ENCODE measurements at regions of chr15 and their contacts with region 1.

Region 1: GRCh38 chr15:52139599-52140491 is 27.3 kb upstream of the BCL2L10 start:
- DNase-seq: peak; percentile 74
- H3K4me3 ChIP-seq: no peak overlapping the region
- H3K27ac ChIP-seq: peak overlapping the region; percentile 3
- H3K4me1 ChIP-seq: peaks cover 11% of the 10 kb centered on the region
- H3K27me3 ChIP-seq: no peaks in the 10 kb centered on the region
- CTCF ChIP-seq: peak; percentile 94

Region 2: DNA sequence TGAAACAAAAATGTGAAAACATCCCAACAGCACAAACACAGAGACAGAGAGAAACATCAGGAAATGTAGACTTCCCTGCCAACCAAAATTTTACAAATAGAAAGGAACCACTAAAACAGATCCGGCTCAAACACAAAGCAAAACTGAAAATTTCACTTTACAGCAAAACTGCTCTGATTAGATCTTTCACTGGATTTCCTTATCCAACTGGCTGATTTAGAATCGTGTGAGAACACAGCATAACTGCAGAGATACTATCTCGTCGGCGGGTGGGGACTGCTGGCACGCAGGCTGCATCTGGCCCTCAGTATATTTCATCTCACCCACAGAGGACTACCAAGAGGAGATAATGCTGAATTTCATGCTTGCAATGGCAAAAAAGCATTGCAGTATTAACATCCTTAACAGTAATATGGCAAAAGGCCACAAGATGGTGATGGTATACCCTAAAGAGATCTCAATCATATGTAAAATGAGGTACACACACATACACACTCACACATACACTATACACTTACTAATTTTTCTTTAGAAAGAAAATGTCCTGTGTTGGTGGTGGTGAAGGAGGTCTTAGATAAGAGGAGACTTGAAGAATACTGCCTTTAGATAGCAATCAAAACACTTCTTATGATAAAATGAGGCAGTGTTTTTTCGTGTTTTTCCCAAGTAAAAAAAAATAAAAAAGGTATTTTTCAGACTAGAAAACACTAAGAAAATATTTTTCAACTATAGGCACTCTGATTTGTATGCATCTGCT is 157.7 kb before region 1 on chr15:
- CTCF ChIA-PET with region 1: interaction called, 5 read pairs
- POLR2A ChIA-PET with region 1: no interaction called
- intact Hi-C with region 1: loop called (anchors 2 kb)
- DNase-seq: peak; percentile 88
- H3K4me3 ChIP-seq: peak overlapping the region; percentile 10
- H3K27ac ChIP-seq: peak overlapping the region; percentile 3
- H3K4me1 ChIP-seq: peaks cover 5% of the 10 kb centered on the region
- H3K27me3 ChIP-seq: no peaks in the 10 kb centered on the region
- CTCF ChIP-seq: peak; percentile 66

Region 3: DNA sequence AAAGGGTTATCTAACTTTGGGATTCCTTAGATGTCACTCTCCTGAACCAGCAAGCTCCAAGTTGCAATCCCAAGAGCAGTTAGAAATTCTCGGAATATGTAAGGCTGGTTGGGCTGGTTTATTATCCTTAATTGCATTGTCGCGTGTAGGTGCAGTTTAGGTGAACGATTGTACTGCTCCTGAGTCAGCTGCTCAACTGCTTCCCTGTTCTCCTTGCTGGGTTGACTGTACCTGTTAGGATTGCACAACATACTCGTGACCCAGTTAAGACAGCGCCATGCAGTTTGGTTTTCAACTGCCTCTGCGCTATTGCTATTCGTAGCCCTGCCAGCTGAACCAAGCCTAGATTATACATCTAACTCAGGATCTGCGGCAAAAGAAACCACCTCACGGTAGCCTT is 68.3 kb before region 1 on chr15:
- CTCF ChIA-PET with region 1: no interaction called
- POLR2A ChIA-PET with region 1: interaction called, 11 read pairs
- intact Hi-C with region 1: no loop called
- DNase-seq: no peak
- H3K4me3 ChIP-seq: no peak overlapping the region
- H3K27ac ChIP-seq: no peak overlapping the region
- H3K4me1 ChIP-seq: no peaks in the 10 kb centered on the region
- H3K27me3 ChIP-seq: no peaks in the 10 kb centered on the region
- CTCF ChIP-seq: no peak

Region 4: GRCh38 chr15:52078876-52079700 is 60.8 kb before region 1 on chr15:
- CTCF ChIA-PET with region 1: interaction called, 3 read pairs
- POLR2A ChIA-PET with region 1: no interaction called
- intact Hi-C with region 1: loop called (anchors 5 kb)
- DNase-seq: peak; percentile 84
- H3K4me3 ChIP-seq: no peak overlapping the region
- H3K27ac ChIP-seq: no peak overlapping the region
- H3K4me1 ChIP-seq: no peaks in the 10 kb centered on the region
- H3K27me3 ChIP-seq: no peaks in the 10 kb centered on the region
- CTCF ChIP-seq: peak; percentile 95

Measured in A673 (cell line).